Mammary epithelial cell (primary cell): ENCODE measurements at regions of chr22 and their contacts with region 1.

Region 1: GRCh38 chr22:32474635-32475467 is at the start of gene FBXO7:
- DNase-seq: peak; percentile 92
- H3K4me3 ChIP-seq: peak within 1 kb of the TSS; percentile 65 to 89 (median 83)
- H3K27ac ChIP-seq: peak within 1 kb of the TSS; percentile 87
- H3K4me1 ChIP-seq: peaks cover 17% of the 10 kb centered on the region
- H3K27me3 ChIP-seq: no peaks in the 10 kb centered on the region
- CTCF ChIP-seq: peak in 1 of 2 donors; percentile 32
- total RNA-seq, gene FBXO7: 67.2 to 69.0 TPM

Region 2: GRCh38 chr22:31977141-31977841 is 497.6 kb before region 1 on chr22:
- CTCF ChIA-PET with region 1: no interaction called
- dilution Hi-C with region 1: no loop called
- in situ Hi-C with region 1: no loop called
- intact Hi-C with region 1: loop called (anchors 1 kb)
- DNase-seq: peak; percentile 72
- H3K4me3 ChIP-seq: no peak overlapping the region
- H3K27ac ChIP-seq: no peak overlapping the region
- H3K4me1 ChIP-seq: no peaks in the 10 kb centered on the region
- H3K27me3 ChIP-seq: no peaks in the 10 kb centered on the region
- CTCF ChIP-seq: peak; percentile 78 to 86

Region 3: DNA sequence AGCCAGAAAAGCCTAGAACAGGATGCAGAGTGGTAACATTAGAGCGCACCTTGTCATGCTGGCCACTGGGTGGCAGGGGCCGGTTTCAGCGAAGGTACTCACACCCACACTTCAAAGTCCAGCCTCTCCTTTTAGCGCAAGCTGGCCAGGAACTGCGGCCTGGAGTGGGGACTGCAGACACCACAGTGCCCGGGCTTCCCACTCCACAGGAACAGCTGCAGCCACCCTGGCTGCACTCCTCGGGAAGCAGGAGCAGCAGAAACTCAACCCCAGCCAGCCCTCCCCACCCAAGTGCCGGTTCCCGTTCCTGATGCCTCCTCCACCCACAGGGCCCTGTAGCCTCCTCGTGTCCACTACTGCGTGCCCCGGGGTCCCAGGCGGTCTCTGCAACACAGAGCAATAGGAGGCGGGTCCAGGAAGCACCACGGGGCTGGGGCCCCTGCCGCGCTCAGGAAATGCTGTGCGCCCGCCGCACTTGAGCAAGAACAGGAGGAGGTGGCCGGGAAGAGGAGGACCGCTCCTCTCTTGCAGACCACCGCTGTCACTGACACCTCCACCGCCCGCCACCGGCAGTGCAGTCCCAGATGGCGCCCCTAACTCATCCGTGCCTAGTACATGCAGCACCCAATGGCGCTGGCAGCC is 272.2 kb before region 1 on chr22:
- CTCF ChIA-PET with region 1: no interaction called
- dilution Hi-C with region 1: no loop called
- in situ Hi-C with region 1: no loop called
- intact Hi-C with region 1: loop called (anchors 1 kb)
- DNase-seq: peak; percentile 51
- H3K4me3 ChIP-seq: no peak overlapping the region
- H3K27ac ChIP-seq: no peak overlapping the region
- H3K4me1 ChIP-seq: no peaks in the 10 kb centered on the region
- H3K27me3 ChIP-seq: no peaks in the 10 kb centered on the region
- CTCF ChIP-seq: peak; percentile 57 to 75

Region 4: GRCh38 chr22:32378707-32379272 is 96.1 kb before region 1 on chr22:
- CTCF ChIA-PET with region 1: no interaction called
- dilution Hi-C with region 1: no loop called
- in situ Hi-C with region 1: no loop called
- intact Hi-C with region 1: loop called (anchors 1 kb)
- DNase-seq: peak; percentile 31
- H3K4me3 ChIP-seq: no peak overlapping the region
- H3K27ac ChIP-seq: no peak overlapping the region
- H3K4me1 ChIP-seq: no peaks in the 10 kb centered on the region
- H3K27me3 ChIP-seq: no peaks in the 10 kb centered on the region
- CTCF ChIP-seq: peak; percentile 75 to 86

Region 5: GRCh38 chr22:32430352-32430751 is 44.5 kb before region 1 on chr22:
- CTCF ChIA-PET with region 1: no interaction called
- dilution Hi-C with region 1: no loop called
- in situ Hi-C with region 1: no loop called
- intact Hi-C with region 1: no loop called
- DNase-seq: no peak
- H3K4me3 ChIP-seq: no peak overlapping the region
- H3K27ac ChIP-seq: no peak overlapping the region
- H3K4me1 ChIP-seq: no peaks in the 10 kb centered on the region
- H3K27me3 ChIP-seq: no peaks in the 10 kb centered on the region
- CTCF ChIP-seq: no peak

Region 6: DNA sequence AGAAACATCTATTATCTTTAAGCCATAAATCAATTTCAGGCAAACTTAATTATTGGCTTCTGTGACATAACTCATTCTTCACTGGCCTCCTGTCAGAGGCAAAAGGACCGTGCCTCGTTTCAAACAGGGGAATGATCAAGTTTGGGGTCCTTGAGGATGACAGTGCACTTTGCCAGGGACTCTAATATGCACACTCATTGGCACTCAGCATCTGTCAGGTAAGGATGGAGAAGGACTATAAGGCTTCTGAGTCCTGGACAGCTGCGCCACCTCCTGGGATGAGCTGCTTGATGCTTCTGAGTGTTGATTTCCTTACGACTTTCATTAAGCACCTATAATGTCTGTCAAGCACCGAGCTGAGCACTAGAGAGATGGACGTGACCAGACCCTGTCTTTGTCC is 30.8 kb before region 1 on chr22:
- CTCF ChIA-PET with region 1: interaction called, 6 read pairs
- dilution Hi-C with region 1: no loop called
- in situ Hi-C with region 1: no loop called
- intact Hi-C with region 1: loop called (anchors 1 kb)
- DNase-seq: peak; percentile 25
- H3K4me3 ChIP-seq: no peak overlapping the region
- H3K27ac ChIP-seq: no peak overlapping the region
- H3K4me1 ChIP-seq: no peaks in the 10 kb centered on the region
- H3K27me3 ChIP-seq: no peaks in the 10 kb centered on the region
- CTCF ChIP-seq: peak; percentile 36 to 70